GM12878 (cell line): ENCODE measurements at regions of chr11 and their contacts with region 1.

Region 1: GRCh38 chr11:33970984-33971466 is 79.1 kb upstream of the LMO2 start:
- DNase-seq: no peak
- ATAC-seq: peak; percentile 93
- H3K4me3 ChIP-seq: no peak overlapping the region
- H3K27ac ChIP-seq: no peak overlapping the region
- H3K4me1 ChIP-seq: no peaks in the 10 kb centered on the region
- H3K27me3 ChIP-seq: no peaks in the 10 kb centered on the region
- CTCF ChIP-seq: peak; percentile 75 to 78 (median 76); a peak in 5 of 6 replicates
- EP300 ChIP-seq: no peak
- POLR2A ChIP-seq: no peak
- RAD21 ChIP-seq: peak; percentile 100

Region 2: DNA sequence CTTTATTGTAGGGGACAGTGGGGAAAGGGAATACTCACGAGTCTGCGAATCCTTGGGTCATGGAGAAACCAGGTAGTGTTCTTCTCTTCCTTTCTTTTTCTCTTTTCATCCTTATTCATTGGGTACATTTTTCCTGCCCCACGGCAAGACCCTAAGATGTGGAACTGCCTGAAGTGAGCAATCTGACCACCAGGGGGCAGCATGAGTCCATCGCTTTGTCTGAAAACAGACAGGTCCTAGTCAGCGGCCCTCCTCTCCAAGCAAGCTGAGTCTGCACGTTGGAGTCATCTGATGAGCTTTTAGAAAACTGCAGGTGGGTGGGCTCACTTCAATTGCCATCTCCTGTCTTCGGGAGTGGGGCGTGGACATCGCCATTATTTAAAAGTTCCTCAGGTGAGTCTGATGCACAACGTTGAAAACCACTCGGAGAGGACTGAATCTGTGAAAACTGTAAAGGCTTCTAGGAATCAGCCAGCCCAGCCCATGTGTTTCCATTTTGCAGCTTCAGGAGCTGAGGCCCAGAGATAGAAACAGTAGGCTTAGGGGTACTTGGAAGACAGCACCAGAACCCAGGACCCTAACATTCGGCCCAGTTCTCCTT is 162.7 kb before region 1 on chr11:
- CTCF ChIA-PET with region 1: interaction called, 15 read pairs
- POLR2A ChIA-PET with region 1: no interaction called
- RAD21 ChIA-PET with region 1: interaction called, 3 read pairs
- SMC1A ChIA-PET with region 1: interaction called, 3 read pairs
- in situ Hi-C with region 1: no loop called
- intact Hi-C with region 1: no loop called
- DNase-seq: peak; percentile 37
- ATAC-seq: peak; percentile 99
- H3K4me3 ChIP-seq: no peak overlapping the region
- H3K27ac ChIP-seq: no peak overlapping the region
- H3K4me1 ChIP-seq: no peaks in the 10 kb centered on the region
- H3K27me3 ChIP-seq: peaks cover 0 to 2% of the 10 kb centered on the region in 2 experiments; a peak in 2 of 4 replicates
- CTCF ChIP-seq: peak; percentile 82 to 92 (median 83)
- EP300 ChIP-seq: no peak
- POLR2A ChIP-seq: no peak
- RAD21 ChIP-seq: peak; percentile 78

Region 3: GRCh38 chr11:33835143-33835878 is 135.7 kb before region 1 on chr11:
- CTCF ChIA-PET with region 1: interaction called, 13 read pairs
- POLR2A ChIA-PET with region 1: no interaction called
- RAD21 ChIA-PET with region 1: interaction called, 4 read pairs
- SMC1A ChIA-PET with region 1: interaction called, 4 read pairs
- in situ Hi-C with region 1: no loop called
- intact Hi-C with region 1: no loop called
- DNase-seq: peak; percentile 3
- ATAC-seq: 0 out of 3 replicates have a peak, but pooled peaks have one; percentile 27
- H3K4me3 ChIP-seq: no peak overlapping the region
- H3K27ac ChIP-seq: no peak overlapping the region
- H3K4me1 ChIP-seq: no peaks in the 10 kb centered on the region
- H3K27me3 ChIP-seq: 0 out of 4 replicates have a peak, but pooled peaks cover 0 to 2% of the 10 kb centered on the region in 2 experiments
- CTCF ChIP-seq: peak in 1 of 3 experiments; percentile 17; a peak in 2 of 6 replicates
- EP300 ChIP-seq: no peak
- POLR2A ChIP-seq: no peak
- RAD21 ChIP-seq: peak; percentile 47

Region 4: DNA sequence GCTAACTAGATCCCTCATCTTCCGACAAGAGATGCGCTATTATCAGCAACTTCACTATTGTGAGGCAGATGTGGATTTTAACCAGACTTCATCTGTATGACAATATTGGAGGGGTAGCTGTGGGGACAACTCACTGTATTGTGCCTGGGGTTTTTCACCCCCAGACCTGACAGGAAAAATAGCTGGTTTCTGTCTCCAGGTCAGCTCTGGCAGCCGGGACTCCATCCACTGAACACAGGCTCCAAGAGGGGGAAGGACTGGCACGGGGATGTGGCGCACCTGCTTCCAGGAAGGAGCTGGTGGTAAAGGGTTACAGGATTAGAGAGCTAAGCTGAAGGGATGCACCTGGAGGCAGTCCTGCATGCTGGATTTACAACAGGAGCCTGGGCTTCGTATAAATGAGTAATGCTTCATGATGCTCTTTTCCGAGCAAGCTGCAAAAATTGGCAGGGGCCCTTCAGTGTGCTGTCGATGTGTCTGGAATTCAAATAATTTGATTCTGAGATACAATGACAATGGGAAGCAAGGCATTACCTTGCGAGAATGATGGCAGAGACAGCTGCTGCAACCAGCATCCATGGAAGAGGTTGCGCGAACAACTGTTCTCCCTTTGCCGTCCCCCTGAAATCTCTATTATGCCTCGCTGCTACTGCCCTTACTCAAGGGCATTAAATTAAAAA is 128.6 kb before region 1 on chr11:
- CTCF ChIA-PET with region 1: interaction called, 16 read pairs
- POLR2A ChIA-PET with region 1: no interaction called
- RAD21 ChIA-PET with region 1: no interaction called
- SMC1A ChIA-PET with region 1: interaction called, 4 read pairs
- in situ Hi-C with region 1: no loop called
- intact Hi-C with region 1: no loop called
- DNase-seq: no peak
- ATAC-seq: no peak
- H3K4me3 ChIP-seq: no peak overlapping the region
- H3K27ac ChIP-seq: no peak overlapping the region
- H3K4me1 ChIP-seq: no peaks in the 10 kb centered on the region
- H3K27me3 ChIP-seq: peaks cover 0 to 3% of the 10 kb centered on the region in 2 experiments; a peak in 1 of 4 replicates
- CTCF ChIP-seq: no peak
- EP300 ChIP-seq: no peak
- POLR2A ChIP-seq: no peak
- RAD21 ChIP-seq: no peak

Region 5: DNA sequence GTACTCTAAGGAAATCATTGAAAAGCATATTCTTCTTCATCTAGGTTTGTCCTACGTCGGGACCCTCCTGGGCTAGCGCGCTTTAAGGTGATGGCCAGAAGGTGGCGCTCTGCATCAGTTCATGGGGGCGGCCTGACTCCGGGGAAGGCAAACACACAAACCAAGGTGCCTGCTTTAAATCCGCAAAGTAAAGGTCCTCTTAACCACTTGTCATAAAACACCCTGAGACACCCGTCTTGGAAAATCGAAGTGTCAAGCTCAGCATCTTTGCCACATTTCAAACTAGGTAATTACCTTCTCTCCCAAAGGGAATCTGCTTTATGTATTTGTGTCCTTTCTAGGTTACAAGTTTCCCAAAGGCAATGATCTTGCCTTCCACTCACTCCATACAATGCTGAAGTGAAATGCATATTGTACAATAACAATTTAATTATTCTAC is 113.1 kb before region 1 on chr11:
- CTCF ChIA-PET with region 1: interaction called, 187 read pairs
- POLR2A ChIA-PET with region 1: no interaction called
- RAD21 ChIA-PET with region 1: interaction called, 14 read pairs
- SMC1A ChIA-PET with region 1: interaction called, 45 read pairs
- in situ Hi-C with region 1: loop called (anchors 5 kb)
- intact Hi-C with region 1: loop called (anchors 1 kb)
- DNase-seq: peak; percentile 32
- ATAC-seq: peak; percentile 99
- H3K4me3 ChIP-seq: no peak overlapping the region
- H3K27ac ChIP-seq: no peak overlapping the region
- H3K4me1 ChIP-seq: no peaks in the 10 kb centered on the region
- H3K27me3 ChIP-seq: peaks cover 0 to 2% of the 10 kb centered on the region in 2 experiments; a peak in 1 of 4 replicates
- CTCF ChIP-seq: peak; percentile 85 to 94 (median 88); a peak in 5 of 6 replicates
- EP300 ChIP-seq: no peak
- POLR2A ChIP-seq: no peak
- RAD21 ChIP-seq: peak; percentile 100

Region 6: DNA sequence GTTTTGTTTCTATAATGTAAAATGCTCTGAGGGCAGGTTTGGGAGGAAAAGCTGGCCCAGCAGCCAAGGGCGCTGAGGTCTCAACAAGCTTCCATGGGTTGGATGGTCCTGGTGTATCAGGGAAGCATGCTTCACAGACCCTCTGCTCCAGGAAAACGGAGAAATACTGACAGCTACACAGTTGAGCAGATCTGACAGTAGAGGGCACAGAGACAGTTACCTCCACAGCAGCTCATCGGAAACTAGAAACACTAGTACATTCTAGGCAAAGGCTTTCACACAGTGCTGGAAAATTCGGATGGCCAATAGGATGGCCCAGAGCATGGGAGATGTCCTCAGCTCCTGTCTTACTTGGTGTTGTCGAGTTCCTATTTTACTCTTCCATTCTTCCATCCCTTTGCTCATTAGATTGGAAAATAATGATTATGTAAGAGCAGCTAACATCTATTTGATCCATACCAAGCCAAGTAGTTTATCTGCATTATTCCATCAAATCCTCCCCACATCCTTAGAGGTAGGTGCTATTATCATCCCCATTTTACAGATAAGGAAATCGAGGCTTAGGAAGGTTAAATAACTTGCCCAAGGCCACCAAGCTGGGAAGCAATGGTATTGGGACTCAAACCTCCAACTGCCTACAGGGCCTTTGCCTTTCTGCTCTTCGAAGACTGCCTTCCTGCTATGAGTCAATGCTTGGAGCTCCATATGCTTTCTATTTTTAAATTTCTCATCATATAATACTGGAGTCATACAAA is 107.4 kb before region 1 on chr11:
- CTCF ChIA-PET with region 1: interaction called, 187 read pairs
- POLR2A ChIA-PET with region 1: no interaction called
- RAD21 ChIA-PET with region 1: interaction called, 14 read pairs
- SMC1A ChIA-PET with region 1: interaction called, 45 read pairs
- in situ Hi-C with region 1: loop called (anchors 5 kb)
- intact Hi-C with region 1: loop called (anchors 1 kb)
- DNase-seq: no peak
- ATAC-seq: no peak
- H3K4me3 ChIP-seq: no peak overlapping the region
- H3K27ac ChIP-seq: no peak overlapping the region
- H3K4me1 ChIP-seq: no peaks in the 10 kb centered on the region; the same call in 1 of the 2 replicates
- H3K27me3 ChIP-seq: peaks cover 1 to 5% of the 10 kb centered on the region in 2 experiments; a peak in 3 of 4 replicates
- CTCF ChIP-seq: 0 out of 6 replicates have a peak, but pooled peaks of 1 of the 3 experiments have one; percentile 6
- EP300 ChIP-seq: no peak
- POLR2A ChIP-seq: no peak
- RAD21 ChIP-seq: peak; percentile 19; the same call in 1 of the 2 replicates

Region 7: DNA sequence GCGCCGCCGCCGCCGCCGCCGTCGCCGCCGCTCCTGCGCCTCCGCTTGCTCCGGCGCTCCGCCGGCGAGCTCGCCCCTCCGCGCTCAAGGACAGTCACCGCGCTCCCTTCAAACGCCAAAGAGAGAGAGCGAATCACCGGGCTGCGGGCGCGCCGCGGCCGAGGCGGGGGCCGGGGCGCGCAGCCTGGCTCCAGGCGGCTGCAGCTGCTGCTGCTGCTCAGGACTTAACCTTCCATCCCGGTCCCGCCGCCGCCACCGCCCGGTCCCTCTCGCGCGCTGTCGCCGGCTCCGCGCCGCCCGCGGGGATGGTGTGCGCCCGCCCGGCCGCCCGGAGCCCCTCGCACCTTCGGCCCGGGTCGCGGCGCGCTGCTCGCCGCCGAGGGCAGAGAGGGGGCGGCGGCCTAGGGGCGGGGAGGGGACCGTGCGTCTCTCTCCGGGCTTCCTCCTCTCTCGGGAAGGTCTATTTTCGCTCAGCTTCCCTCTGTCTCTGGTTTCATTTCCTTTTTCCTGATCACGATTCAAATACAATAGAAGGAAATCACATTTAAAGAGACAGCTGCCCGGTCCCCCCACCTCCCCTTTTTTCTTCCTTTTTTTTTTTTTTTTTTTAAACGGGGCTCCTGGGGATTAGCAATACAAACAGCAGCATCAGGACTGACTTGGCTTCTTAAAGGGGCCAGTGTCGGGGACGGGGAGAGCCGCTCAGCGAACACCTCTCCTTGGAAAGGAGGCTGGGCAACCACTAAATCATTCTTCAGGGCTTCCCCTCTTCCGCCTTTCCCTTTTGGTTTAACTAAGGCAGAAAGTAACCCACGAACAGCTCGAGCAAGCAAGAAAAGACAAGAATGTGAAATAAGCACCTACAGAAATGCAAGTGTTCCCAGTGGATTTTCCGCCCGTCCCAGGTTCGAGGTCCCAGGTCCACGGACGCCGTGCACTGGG is 101.3 kb before region 1 on chr11:
- CTCF ChIA-PET with region 1: interaction called, 187 read pairs
- POLR2A ChIA-PET with region 1: no interaction called
- RAD21 ChIA-PET with region 1: interaction called, 6 read pairs
- SMC1A ChIA-PET with region 1: interaction called, 14 read pairs
- in situ Hi-C with region 1: loop called (anchors 5 kb)
- intact Hi-C with region 1: no loop called
- DNase-seq: no peak
- ATAC-seq: peak; percentile 61
- H3K4me3 ChIP-seq: peak overlapping the region; percentile 75
- H3K27ac ChIP-seq: no peak overlapping the region
- H3K4me1 ChIP-seq: peaks cover 4% of the 10 kb centered on the region
- H3K27me3 ChIP-seq: peaks cover 4 to 8% of the 10 kb centered on the region in 2 experiments
- CTCF ChIP-seq: no peak
- EP300 ChIP-seq: no peak
- POLR2A ChIP-seq: no peak
- RAD21 ChIP-seq: no peak